ENCODE measurements at regions of chr1 and their contacts with region 1.

Region 1: GRCh38 chr1:208245185-208245705 is 1.1 kb upstream of the PLXNA2 start:
- DNase-seq: peak; percentile 74 to 87 (median 81)
- H3K4me3 ChIP-seq: peak overlapping the region; percentile 58 to 88 (median 76)
- H3K4me3 Mint-ChIP-seq: peak overlapping the region; percentile 83 to 92
- H3K27ac ChIP-seq: peak overlapping the region; percentile 19 to 80
- H3K27ac Mint-ChIP-seq: peak overlapping the region; percentile 51 to 93 (median 88)
- H3K4me1 ChIP-seq: peaks cover 20 to 32% of the 10 kb centered on the region in 2 donors
- H3K4me1 Mint-ChIP-seq: peaks cover 29% of the 10 kb centered on the region
- H3K27me3 ChIP-seq: peaks cover 24 to 38% of the 10 kb centered on the region in 2 donors
- H3K27me3 Mint-ChIP-seq: peaks cover 31 to 49% (median 32%) of the 10 kb centered on the region in 3 donors
- CTCF ChIP-seq: peak; percentile 78

Region 2: GRCh38 chr1:208024406-208024805 is 220.8 kb before region 1 on chr1:
- intact Hi-C with region 1: loop called (anchors 2 to 5 kb)
- DNase-seq: no peak
- H3K4me3 ChIP-seq: no peak overlapping the region
- H3K4me3 Mint-ChIP-seq: no peak overlapping the region
- H3K27ac ChIP-seq: no peak overlapping the region
- H3K27ac Mint-ChIP-seq: no peak overlapping the region
- H3K4me1 ChIP-seq: no peaks in the 10 kb centered on the region
- H3K4me1 Mint-ChIP-seq: no peaks in the 10 kb centered on the region
- H3K27me3 ChIP-seq: no peaks in the 10 kb centered on the region
- H3K27me3 Mint-ChIP-seq: peaks cover 2 to 4% (median 3%) of the 10 kb centered on the region in 3 donors
- CTCF ChIP-seq: no peak

Region 3: GRCh38 chr1:208132287-208132883 is 112.9 kb before region 1 on chr1:
- intact Hi-C with region 1: loop called (anchors 5 kb)
- DNase-seq: peak; percentile 25 to 50 (median 30)
- H3K4me3 ChIP-seq: no peak overlapping the region
- H3K4me3 Mint-ChIP-seq: no peak overlapping the region
- H3K27ac ChIP-seq: no peak overlapping the region
- H3K27ac Mint-ChIP-seq: no peak overlapping the region
- H3K4me1 ChIP-seq: no peaks in the 10 kb centered on the region
- H3K4me1 Mint-ChIP-seq: peaks cover 15% of the 10 kb centered on the region
- H3K27me3 ChIP-seq: no peaks in the 10 kb centered on the region
- H3K27me3 Mint-ChIP-seq: peaks cover 2 to 13% (median 10%) of the 10 kb centered on the region in 3 donors
- CTCF ChIP-seq: peak; percentile 94

Measured in CD14-positive monocyte (primary cell).